Activated CD4-positive, alpha-beta memory T cell treated with anti-CD3 and anti-CD28 coated beads for 36 hours (primary cell): ENCODE measurements at regions of chr16 and their contacts with region 1.

Region 1: DNA sequence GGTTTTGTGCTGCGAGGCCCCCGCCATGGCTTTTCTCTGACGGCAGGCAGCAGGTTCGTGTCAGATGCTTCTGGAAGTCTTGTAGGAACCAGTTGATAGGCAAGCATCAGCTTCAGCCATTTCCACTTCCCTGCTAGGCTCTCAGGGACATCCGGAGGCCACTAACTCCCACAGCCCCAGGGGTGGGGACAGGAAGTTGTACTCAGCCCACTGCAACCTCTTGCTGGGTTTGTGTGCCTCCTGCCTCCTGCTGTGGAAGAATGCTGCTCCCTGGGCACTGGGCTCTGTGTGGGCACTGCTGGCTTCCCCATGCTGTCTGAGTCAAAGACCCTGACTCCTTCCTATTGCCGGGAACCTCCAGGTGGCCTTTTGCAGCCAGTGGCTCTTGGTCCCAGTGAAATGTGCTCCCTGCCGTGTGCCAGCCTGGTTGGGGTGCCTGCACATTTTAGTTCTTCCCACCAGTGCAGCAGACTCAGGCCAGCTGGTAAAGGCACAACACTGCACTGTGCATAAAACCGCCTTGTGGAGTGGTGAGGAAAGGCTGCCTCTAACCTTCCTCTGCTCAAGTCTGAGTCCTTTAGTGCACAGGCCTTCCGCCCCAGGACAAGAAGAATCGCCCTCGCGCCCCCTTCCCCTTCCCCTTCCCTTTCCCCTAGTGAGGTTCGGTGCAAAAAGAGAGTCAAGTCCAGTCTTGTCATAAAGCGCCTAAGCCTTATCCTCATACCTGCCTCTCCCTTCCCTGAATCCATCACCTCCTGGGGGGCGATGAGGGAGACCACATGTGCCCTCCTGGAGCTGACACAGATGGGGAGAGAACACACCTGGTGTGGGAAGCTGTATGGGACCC is 16.6 kb downstream of the LDHD start:
- DNase-seq: peak; percentile 76
- H3K4me3 Mint-ChIP-seq: peak overlapping the region; percentile 50
- H3K27ac Mint-ChIP-seq: peak overlapping the region; percentile 92
- H3K4me1 Mint-ChIP-seq: peaks cover 57% of the 10 kb centered on the region
- H3K27me3 Mint-ChIP-seq: no peaks in the 10 kb centered on the region

Region 2: DNA sequence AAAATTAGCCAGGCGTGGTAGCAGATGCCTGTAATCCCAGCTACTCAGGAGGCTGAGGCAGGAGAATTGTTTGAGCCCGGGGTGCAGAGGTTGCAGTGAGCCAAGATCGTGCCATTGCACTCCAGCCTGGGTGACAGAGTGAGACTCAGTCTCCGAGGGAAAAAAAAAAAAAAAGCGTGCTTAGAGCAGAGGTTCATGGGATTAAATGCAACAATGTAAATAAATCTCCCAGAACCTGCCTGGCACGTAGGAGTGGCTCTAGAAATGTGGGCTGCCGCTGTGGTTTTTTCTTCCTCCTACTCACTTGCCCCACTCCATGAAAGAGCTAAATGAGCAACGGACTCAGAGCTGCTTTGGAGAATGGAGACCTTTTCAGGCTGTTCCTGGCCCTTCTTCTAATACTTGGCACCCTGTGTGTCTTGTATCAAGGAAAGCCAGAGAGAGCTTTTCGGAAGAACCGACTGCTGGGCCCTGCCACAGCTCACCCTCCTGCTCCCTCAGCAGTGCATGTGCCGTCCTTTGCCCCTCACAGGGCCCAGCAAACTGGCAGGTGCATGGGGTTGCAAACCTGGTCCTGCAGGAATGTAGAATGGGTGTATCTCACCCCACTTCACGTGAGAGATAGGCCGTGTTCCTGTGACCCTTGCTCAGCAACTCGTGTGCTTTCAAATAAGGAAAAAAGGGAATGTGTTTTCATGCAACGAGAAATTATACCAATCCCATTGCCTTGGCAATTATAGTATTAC is 35.4 kb before region 1 on chr16:
- CTCF ChIA-PET with region 1: interaction called, 3 read pairs
- POLR2A ChIA-PET with region 1: interaction called, 3 read pairs
- intact Hi-C with region 1: loop called (anchors 5 kb)
- DNase-seq: peak; percentile 62
- H3K4me3 Mint-ChIP-seq: peak overlapping the region; percentile 5
- H3K27ac Mint-ChIP-seq: no peak overlapping the region
- H3K4me1 Mint-ChIP-seq: peaks cover 25% of the 10 kb centered on the region
- H3K27me3 Mint-ChIP-seq: no peaks in the 10 kb centered on the region

Region 3: GRCh38 chr16:75074920-75075687 is 24.9 kb before region 1 on chr16:
- CTCF ChIA-PET with region 1: interaction called, 7 read pairs
- POLR2A ChIA-PET with region 1: interaction called, 7 read pairs
- intact Hi-C with region 1: loop called (anchors 1 kb)
- DNase-seq: peak; percentile 93
- H3K4me3 Mint-ChIP-seq: peak overlapping the region; percentile 52
- H3K27ac Mint-ChIP-seq: peak overlapping the region; percentile 91
- H3K4me1 Mint-ChIP-seq: peaks cover 42% of the 10 kb centered on the region
- H3K27me3 Mint-ChIP-seq: no peaks in the 10 kb centered on the region